GM18951 (cell line): ENCODE measurements at regions of chr2 and their contacts with region 1.

Region 1: GRCh38 chr2:225649274-225649673 is 249.8 kb downstream of the NYAP2 start:
- POLR2A ChIP-seq: no peak

Region 2: DNA sequence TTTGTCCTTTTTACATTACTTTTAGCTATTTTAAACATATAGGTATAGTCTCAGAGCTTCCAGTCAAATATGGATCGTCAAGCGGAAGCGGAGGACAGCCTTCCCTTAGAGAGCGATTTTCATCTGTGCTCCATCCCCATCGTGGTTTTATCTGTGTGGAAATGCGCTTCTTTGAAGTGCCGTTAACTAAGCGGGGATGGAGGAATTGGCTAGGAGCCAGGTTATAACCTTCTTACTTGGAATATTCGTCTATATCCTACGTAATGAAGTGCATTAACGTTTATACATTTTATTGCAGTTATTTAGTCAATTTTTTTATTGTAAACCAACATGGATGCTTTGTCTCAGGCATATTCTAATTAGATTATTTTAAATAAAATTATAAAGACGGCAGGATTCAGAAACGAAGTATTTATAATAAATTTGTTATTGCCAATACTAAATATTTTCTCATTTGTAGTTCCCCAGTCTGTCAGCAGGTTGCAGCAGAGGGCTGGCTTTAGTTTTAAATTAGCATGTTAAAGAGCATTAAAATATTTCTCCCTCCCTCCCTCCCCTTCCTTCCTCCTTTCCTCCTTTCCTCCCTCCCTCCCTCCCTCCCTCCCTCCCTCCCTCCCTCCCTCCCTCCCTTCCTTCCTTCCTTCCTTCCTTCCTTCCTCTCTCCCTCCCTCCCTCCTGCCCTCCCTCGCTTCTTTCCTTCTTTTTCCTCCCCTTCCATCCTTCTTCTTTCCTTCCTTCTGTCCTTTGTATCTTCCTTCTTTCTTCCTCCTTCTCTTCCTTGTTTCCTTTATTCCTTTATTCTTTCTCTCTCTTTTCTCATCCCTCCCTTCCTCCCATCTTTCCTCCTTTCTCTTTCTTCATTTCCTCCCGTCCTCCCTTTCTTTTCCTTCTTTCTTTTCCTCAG is 526.4 kb before region 1 on chr2:
- in situ Hi-C with region 1: loop called (anchors 10 kb)
- POLR2A ChIP-seq: no peak

Region 3: DNA sequence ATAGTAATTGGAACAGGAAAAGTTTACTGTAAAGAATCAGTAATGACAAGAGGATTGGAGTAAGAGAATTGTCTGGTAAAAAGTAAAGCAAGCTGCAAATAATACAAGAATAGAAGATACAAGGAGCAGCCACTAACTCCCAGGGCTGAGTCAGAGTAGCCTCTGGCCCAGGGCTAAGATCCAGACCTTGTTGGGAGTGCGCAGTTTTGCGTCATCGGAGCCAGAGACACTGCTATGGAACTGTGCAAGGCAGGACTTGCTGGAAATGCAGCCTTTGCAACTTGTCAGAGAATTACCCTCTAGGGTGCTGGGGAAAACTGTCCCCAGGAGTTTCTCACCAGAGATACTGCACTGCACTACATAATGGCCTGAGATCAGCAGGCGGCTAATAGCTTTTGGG is 114.6 kb before region 1 on chr2:
- in situ Hi-C with region 1: no loop called
- POLR2A ChIP-seq: no peak